ENCODE measurements at regions of chr9 and their contacts with region 1.

Region 1: GRCh38 chr9:136363606-136364370 is at the start of gene DNLZ:
- DNase-seq: no peak
- H3K4me3 ChIP-seq: peak within 1 kb of the TSS; percentile 75 to 99
- H3K27ac ChIP-seq: peak within 1 kb of the TSS; percentile 82
- H3K4me1 ChIP-seq: peaks cover 39% of the 10 kb centered on the region
- H3K27me3 ChIP-seq: no peaks in the 10 kb centered on the region
- CTCF ChIP-seq: peak; percentile 94 to 99 (median 97)
- POLR2A ChIP-seq: no peak
- total RNA-seq, gene DNLZ: 25.0 TPM

Region 2: DNA sequence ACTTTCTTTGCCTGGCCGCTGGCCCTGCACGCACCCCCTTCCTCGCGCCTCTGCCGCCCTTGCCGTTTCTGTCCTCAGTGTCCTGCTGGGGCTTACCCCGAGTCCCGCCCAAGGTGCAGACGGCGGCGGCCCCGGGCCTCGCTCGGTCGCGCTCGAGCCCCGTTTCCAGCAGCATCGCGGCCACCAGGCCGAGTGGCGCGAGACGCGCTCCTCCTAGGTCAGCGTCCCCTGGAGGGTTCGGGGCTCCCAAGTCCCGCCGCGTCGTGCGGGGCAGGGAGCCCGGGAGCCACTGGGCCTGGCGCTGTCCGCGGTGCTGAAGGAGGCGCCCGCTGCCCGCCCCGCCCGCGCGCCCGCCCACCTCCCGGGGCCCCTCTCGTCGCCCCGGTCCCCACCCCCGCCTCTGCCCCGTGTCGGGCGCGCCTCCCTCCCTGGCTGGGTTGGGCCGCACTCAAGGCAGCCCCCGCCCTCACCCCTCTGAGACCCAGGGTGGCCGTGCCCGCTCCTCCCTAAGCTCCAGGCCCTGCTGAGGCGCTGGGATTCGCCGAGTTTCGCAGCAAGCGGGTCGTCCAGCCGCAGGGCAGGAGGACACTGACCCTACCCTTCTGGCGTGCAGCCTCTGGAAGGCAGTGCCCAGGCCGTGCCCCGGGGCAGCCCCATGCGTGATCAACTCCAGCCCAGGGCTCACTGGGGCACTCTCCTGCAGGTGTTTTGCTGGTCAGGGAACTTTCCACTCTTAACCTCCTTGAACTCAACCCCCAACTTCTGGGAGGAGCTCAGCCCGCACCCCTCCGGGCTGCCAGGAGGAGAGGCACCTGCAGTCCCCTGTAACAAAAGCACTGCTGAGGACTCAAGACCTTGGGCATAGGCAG is 158.7 kb before region 1 on chr9 and contains the start of gene LHX3:
- intact Hi-C with region 1: loop called (anchors 5 kb)
- DNase-seq: no peak
- H3K4me3 ChIP-seq: no peak within 1 kb of the TSS
- H3K27ac ChIP-seq: no peak within 1 kb of the TSS
- H3K4me1 ChIP-seq: no peaks in the 10 kb centered on the region
- H3K27me3 ChIP-seq: no peaks in the 10 kb centered on the region
- CTCF ChIP-seq: no peak
- POLR2A ChIP-seq: no peak
- total RNA-seq, gene LHX3: not detected

Region 3: DNA sequence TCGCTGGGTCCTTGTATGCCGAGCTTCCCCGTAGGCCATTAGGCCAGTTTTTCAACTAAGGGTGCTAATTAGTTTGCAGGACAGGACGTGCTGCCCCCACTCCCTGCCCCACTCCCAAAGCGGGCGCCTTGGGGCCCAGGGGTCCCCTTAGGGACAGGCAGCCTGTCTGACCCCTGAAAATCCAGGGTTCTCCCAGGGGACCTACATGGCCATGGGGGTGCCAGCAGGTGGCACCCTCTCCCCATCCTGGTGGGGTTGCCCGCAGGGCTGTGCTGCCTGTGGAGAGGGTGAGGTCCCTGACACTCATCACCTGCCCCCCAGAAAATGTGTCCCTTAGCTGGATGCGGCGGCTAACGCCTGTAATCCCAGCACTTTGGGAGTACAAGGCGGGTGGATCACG is 51.4 kb before region 1 on chr9:
- intact Hi-C with region 1: loop called (anchors 10 kb)
- DNase-seq: no peak
- H3K4me3 ChIP-seq: no peak overlapping the region
- H3K27ac ChIP-seq: no peak overlapping the region
- H3K4me1 ChIP-seq: no peaks in the 10 kb centered on the region
- H3K27me3 ChIP-seq: no peaks in the 10 kb centered on the region
- CTCF ChIP-seq: peak in 2 of 3 experiments; percentile 51 to 61
- POLR2A ChIP-seq: no peak

Region 4: GRCh38 chr9:136328622-136329041 is 35.2 kb before region 1 on chr9:
- intact Hi-C with region 1: no loop called
- DNase-seq: no peak
- H3K4me3 ChIP-seq: peak overlapping the region; percentile 71 to 87
- H3K27ac ChIP-seq: peak overlapping the region; percentile 94
- H3K4me1 ChIP-seq: peaks cover 58% of the 10 kb centered on the region
- H3K27me3 ChIP-seq: no peaks in the 10 kb centered on the region
- CTCF ChIP-seq: no peak
- POLR2A ChIP-seq: no peak

Region 5: DNA sequence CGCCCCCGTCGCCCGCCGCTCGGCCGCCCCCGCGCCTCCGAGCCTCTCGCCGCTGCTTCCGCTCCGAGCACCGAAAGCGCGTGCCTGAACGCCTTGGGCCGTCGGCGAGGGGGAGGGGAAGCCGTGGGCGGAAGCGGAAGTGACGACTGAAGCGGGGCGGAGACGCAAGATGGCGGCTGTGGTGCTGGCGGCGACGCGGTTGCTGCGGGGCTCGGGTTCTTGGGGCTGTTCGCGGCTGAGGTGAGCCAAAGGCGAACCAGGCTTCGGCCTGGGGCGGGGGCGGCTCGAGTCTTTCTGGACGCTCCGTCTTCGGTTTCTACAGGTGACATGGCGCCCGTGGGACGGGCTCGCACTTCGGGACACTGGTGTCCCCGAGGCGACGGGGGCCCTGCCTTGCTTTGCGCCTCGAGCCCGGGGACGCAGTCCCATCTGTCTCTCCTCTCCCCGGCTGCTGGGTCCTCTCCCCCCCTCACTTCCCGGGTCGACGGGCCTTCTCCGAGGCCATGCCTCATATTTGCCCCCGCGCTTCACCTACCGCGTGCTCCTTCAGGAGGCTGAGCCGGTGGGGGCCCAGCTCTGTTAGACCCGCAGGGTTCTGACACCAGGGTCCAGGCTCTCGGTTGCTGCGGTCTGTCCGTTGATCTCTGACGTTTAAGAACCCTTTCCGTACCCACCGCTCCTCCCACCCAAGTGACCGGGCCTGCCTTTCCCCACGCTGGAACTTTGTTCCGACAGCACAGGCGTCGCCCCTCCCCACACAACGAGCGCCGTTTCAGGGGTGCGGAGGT is 46.9 kb after region 1 on chr9 and contains the starts of genes ENTR1 and PMPCA:
- intact Hi-C with region 1: no loop called
- DNase-seq: no peak
- H3K4me3 ChIP-seq: peak within 1 kb of the TSS; percentile 76 to 89
- H3K27ac ChIP-seq: peak within 1 kb of the TSS; percentile 73
- H3K4me1 ChIP-seq: peaks cover 36% of the 10 kb centered on the region
- H3K27me3 ChIP-seq: no peaks in the 10 kb centered on the region
- CTCF ChIP-seq: no peak
- POLR2A ChIP-seq: peak in 1 of 2 donors; percentile 75
- total RNA-seq, gene ENTR1: 60.4 TPM
- total RNA-seq, gene PMPCA: 23.6 TPM

Region 6: GRCh38 chr9:136429683-136430590 is 66.1 kb after region 1 on chr9:
- intact Hi-C with region 1: no loop called
- DNase-seq: no peak
- H3K4me3 ChIP-seq: no peak overlapping the region
- H3K27ac ChIP-seq: no peak overlapping the region
- H3K4me1 ChIP-seq: no peaks in the 10 kb centered on the region
- H3K27me3 ChIP-seq: no peaks in the 10 kb centered on the region
- CTCF ChIP-seq: no peak
- POLR2A ChIP-seq: no peak

Measured in vagina (tissue), 2 donors.